Activated CD4-positive, alpha-beta T cell treated with anti-CD3 and anti-CD28 coated beads for 36 hours (primary cell): ENCODE measurements at regions of chr12 and their contacts with region 1.

Region 1: GRCh38 chr12:8045952-8046944 is 13.7 kb downstream of the FOXJ2 start:
- DNase-seq: peak; percentile 90
- ATAC-seq: peak; percentile 72
- H3K4me3 Mint-ChIP-seq: no peak overlapping the region
- H3K27ac Mint-ChIP-seq: no peak overlapping the region
- H3K4me1 Mint-ChIP-seq: peaks cover 15% of the 10 kb centered on the region
- H3K27me3 Mint-ChIP-seq: no peaks in the 10 kb centered on the region

Region 2: DNA sequence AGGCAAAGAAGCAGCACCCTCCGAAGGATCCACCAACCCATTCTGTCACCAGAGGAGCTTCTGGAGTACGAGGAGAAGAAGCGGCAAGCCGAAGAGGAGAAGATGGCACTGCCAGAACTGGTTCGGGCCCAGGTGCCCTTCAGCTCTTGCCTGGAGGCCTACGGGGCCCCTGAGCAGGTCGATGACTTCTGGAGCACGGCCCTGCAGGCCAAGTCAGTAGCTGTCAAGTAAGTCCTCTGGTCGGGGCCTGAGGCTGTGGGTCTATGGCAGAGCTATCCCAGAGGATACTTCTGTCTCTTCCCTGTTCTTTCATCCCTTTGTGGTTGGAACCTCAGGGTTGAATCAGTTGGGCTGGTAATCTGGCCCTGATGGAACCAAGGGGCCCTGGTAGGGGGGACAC is 1184.9 kb before region 1 on chr12:
- CTCF ChIA-PET with region 1: no interaction called
- POLR2A ChIA-PET with region 1: no interaction called
- intact Hi-C with region 1: no loop called
- DNase-seq: no peak
- ATAC-seq: no peak
- H3K4me3 Mint-ChIP-seq: no peak overlapping the region
- H3K27ac Mint-ChIP-seq: no peak overlapping the region
- H3K4me1 Mint-ChIP-seq: peaks cover 1% of the 10 kb centered on the region
- H3K27me3 Mint-ChIP-seq: no peaks in the 10 kb centered on the region

Region 3: DNA sequence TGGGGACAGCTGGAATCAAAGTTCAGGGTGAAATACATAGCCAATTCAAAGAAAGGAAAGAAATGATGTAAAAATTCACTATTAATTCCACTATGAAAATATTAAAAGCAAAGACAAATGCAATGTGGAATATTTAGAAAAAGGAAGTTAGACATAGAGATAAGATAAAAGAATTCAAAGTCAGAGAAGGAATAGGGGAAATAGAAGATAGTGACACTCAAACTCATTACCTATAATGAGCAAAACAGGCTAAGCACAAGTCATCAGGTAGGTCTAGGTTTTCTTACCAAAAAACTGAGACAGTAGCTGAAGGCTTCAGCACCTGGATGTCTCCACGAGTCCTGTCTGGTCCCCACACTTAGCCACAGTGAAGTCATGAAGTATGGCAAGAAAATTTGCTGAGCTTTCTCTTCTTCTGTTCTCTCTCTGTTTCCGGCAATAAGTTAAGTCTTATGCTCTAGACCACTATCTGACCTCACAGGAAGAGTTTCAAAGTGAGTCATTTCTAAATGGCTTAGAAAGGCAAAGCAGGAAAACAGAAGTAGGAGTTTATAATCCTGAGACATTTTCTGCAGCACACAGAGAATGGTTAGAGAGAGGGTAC is 19.8 kb after region 1 on chr12 and contains the start of gene C3AR1:
- CTCF ChIA-PET with region 1: interaction called, 11 read pairs
- POLR2A ChIA-PET with region 1: no interaction called
- intact Hi-C with region 1: no loop called
- DNase-seq: peak; percentile 48
- ATAC-seq: peak; percentile 98
- H3K4me3 Mint-ChIP-seq: peak within 1 kb of the TSS; percentile 43
- H3K27ac Mint-ChIP-seq: peak within 1 kb of the TSS; percentile 76
- H3K4me1 Mint-ChIP-seq: peaks cover 29% of the 10 kb centered on the region
- H3K27me3 Mint-ChIP-seq: no peaks in the 10 kb centered on the region
- total RNA-seq, gene C3AR1: 0.33 to 0.57 TPM

Region 4: GRCh38 chr12:8127138-8127537 is 80.9 kb after region 1 on chr12:
- CTCF ChIA-PET with region 1: no interaction called
- POLR2A ChIA-PET with region 1: no interaction called
- intact Hi-C with region 1: no loop called
- DNase-seq: peak; percentile 6
- ATAC-seq: peak; percentile 66
- H3K4me3 Mint-ChIP-seq: no peak overlapping the region
- H3K27ac Mint-ChIP-seq: no peak overlapping the region
- H3K4me1 Mint-ChIP-seq: peaks cover 15% of the 10 kb centered on the region
- H3K27me3 Mint-ChIP-seq: no peaks in the 10 kb centered on the region

Region 5: DNA sequence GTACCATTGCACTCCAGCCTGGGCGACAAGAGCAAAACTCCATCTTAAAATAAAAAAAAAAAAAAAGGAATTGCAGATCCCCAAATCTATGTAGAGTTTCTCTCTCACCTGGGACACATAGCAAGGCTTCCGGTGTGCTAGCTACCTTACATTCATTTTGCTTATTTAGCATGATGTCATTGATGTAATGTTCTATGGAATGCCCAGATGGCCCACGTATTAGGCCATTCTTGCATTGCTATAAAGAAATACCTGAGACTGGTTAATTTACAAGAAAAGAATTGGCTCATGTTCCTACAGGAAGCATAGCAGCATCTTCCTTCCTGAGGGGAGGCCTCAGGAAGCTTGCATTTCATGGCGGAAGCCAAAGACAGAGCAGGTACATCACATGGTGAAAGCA is 739.3 kb after region 1 on chr12:
- CTCF ChIA-PET with region 1: no interaction called
- POLR2A ChIA-PET with region 1: no interaction called
- intact Hi-C with region 1: no loop called
- DNase-seq: no peak
- ATAC-seq: no peak
- H3K4me3 Mint-ChIP-seq: no peak overlapping the region
- H3K27ac Mint-ChIP-seq: no peak overlapping the region
- H3K4me1 Mint-ChIP-seq: no peaks in the 10 kb centered on the region
- H3K27me3 Mint-ChIP-seq: no peaks in the 10 kb centered on the region